Caco-2 (cell line): ENCODE measurements at regions of chr20 and their contacts with region 1.

Region 1: GRCh38 chr20:52484438-52484837 is 292.9 kb upstream of the ZFP64 start:
- DNase-seq: no peak
- H3K4me3 ChIP-seq: no peak overlapping the region
- H3K4me3 Mint-ChIP-seq: no peak overlapping the region
- H3K27ac Mint-ChIP-seq: no peak overlapping the region
- H3K4me1 ChIP-seq: 0 out of 2 replicates have a peak, but pooled peaks cover 3% of the 10 kb centered on the region
- H3K4me1 Mint-ChIP-seq: peaks cover 8% of the 10 kb centered on the region
- H3K27me3 ChIP-seq: no peaks in the 10 kb centered on the region
- H3K27me3 Mint-ChIP-seq: peaks cover 10% of the 10 kb centered on the region
- CTCF ChIP-seq: no peak

Region 2: GRCh38 chr20:51458751-51459439 is 1025.5 kb before region 1 on chr20:
- CTCF ChIA-PET with region 1: no interaction called
- POLR2A ChIA-PET with region 1: interaction called, 26 read pairs
- intact Hi-C with region 1: no loop called
- DNase-seq: peak in 1 of 2 experiments; percentile 19
- H3K4me3 ChIP-seq: no peak overlapping the region
- H3K4me3 Mint-ChIP-seq: no peak overlapping the region
- H3K27ac Mint-ChIP-seq: no peak overlapping the region
- H3K4me1 ChIP-seq: no peaks in the 10 kb centered on the region
- H3K4me1 Mint-ChIP-seq: no peaks in the 10 kb centered on the region
- H3K27me3 ChIP-seq: no peaks in the 10 kb centered on the region
- H3K27me3 Mint-ChIP-seq: no peaks in the 10 kb centered on the region
- CTCF ChIP-seq: no peak

Region 3: GRCh38 chr20:52524861-52525260 is 40.4 kb after region 1 on chr20:
- CTCF ChIA-PET with region 1: no interaction called
- POLR2A ChIA-PET with region 1: no interaction called
- intact Hi-C with region 1: no loop called
- DNase-seq: no peak
- H3K4me3 ChIP-seq: no peak overlapping the region
- H3K4me3 Mint-ChIP-seq: no peak overlapping the region
- H3K27ac Mint-ChIP-seq: no peak overlapping the region
- H3K4me1 ChIP-seq: no peaks in the 10 kb centered on the region
- H3K4me1 Mint-ChIP-seq: no peaks in the 10 kb centered on the region
- H3K27me3 ChIP-seq: no peaks in the 10 kb centered on the region
- H3K27me3 Mint-ChIP-seq: peaks cover 10% of the 10 kb centered on the region
- CTCF ChIP-seq: no peak

Region 4: DNA sequence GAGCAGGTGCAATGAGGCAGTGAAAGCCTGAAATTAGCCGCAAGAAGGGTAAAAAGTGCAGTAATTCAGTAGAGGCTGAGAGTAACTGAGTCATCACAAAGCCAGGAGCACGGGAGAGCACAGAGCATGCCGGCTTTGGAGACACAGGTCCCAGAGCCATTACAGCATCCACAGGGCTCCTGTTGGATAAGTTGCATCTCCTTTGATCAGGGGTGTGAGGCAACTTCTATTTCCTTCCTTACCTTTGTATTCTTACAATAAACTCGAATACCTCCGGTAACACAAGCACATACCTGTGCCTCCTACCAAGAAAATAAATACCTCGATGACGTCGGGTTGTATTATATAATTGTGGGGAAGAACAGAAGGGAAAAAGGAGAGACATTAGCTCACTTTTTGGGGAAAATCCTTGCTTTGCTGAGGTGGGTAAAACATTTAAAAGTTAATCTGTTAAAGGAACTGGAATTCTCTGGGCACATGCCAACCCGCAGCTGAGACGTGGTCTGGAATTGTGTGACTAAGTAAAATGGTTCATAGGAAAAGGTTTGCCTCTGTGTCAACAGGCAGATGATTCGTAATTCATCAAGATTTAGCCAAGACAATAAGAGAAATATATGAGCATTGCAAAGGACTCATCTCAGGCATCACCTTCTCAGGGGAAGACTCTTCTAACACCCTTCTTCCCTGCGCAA is 67.9 kb after region 1 on chr20:
- CTCF ChIA-PET with region 1: no interaction called
- POLR2A ChIA-PET with region 1: no interaction called
- intact Hi-C with region 1: no loop called
- DNase-seq: no peak
- H3K4me3 ChIP-seq: no peak overlapping the region
- H3K4me3 Mint-ChIP-seq: no peak overlapping the region
- H3K27ac Mint-ChIP-seq: no peak overlapping the region
- H3K4me1 ChIP-seq: no peaks in the 10 kb centered on the region
- H3K4me1 Mint-ChIP-seq: no peaks in the 10 kb centered on the region
- H3K27me3 ChIP-seq: no peaks in the 10 kb centered on the region
- H3K27me3 Mint-ChIP-seq: peaks cover 5% of the 10 kb centered on the region
- CTCF ChIP-seq: no peak